Colonic mucosa (tissue), 4 donors: ENCODE measurements at regions of chr1 and their contacts with region 1.

Region 1: GRCh38 chr1:31548907-31549808 is 27.2 kb upstream of the TINAGL1 start:
- DNase-seq: peak; percentile 97
- H3K4me3 ChIP-seq: peak overlapping the region; percentile 22
- H3K27ac ChIP-seq: peak overlapping the region; percentile 83
- H3K4me1 ChIP-seq: peaks cover 5% of the 10 kb centered on the region
- H3K27me3 ChIP-seq: no peaks in the 10 kb centered on the region
- CTCF ChIP-seq: peak; percentile 96

Region 2: GRCh38 chr1:31394628-31395193 is 154.4 kb before region 1 on chr1:
- intact Hi-C with region 1: loop called (anchors 10 kb)
- DNase-seq: peak; percentile 95
- H3K4me3 ChIP-seq: peak overlapping the region; percentile 37
- H3K27ac ChIP-seq: no peak overlapping the region
- H3K4me1 ChIP-seq: no peaks in the 10 kb centered on the region
- H3K27me3 ChIP-seq: no peaks in the 10 kb centered on the region
- CTCF ChIP-seq: peak; percentile 85

Region 3: GRCh38 chr1:31460027-31460426 is 89.1 kb before region 1 on chr1:
- intact Hi-C with region 1: loop called (anchors 2 kb)
- DNase-seq: no peak
- H3K4me3 ChIP-seq: no peak overlapping the region
- H3K27ac ChIP-seq: no peak overlapping the region
- H3K4me1 ChIP-seq: no peaks in the 10 kb centered on the region
- H3K27me3 ChIP-seq: no peaks in the 10 kb centered on the region
- CTCF ChIP-seq: peak; percentile 9

Region 4: GRCh38 chr1:32052887-32053286 is 503.7 kb after region 1 on chr1:
- intact Hi-C with region 1: no loop called
- DNase-seq: no peak
- H3K4me3 ChIP-seq: no peak overlapping the region
- H3K27ac ChIP-seq: no peak overlapping the region
- H3K4me1 ChIP-seq: no peaks in the 10 kb centered on the region
- H3K27me3 ChIP-seq: no peaks in the 10 kb centered on the region
- CTCF ChIP-seq: no peak